BJ (cell line): ENCODE measurements at regions of chr10 and their contacts with region 1.

Region 1: DNA sequence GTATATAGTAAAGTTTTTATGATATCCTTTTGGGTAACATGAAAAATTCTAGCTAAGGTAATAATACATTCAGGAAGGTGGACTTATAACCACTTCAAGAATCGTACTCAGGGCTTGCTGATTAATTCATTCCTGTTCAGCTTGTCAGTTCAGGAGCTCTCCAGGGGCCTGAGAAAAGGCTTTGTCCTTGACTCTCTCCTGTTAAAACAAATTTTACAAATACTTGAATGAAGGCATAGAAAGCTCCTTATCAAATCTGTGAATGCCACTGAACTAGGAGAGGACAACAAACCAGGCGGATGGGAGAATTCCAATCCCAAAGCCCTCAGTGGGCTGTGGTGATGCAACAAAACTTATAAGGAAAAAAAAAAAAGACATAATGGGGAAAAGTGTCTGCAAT is 354.5 kb upstream of the ZMIZ1 start:
- DNase-seq: no peak
- H3K4me3 ChIP-seq: no peak overlapping the region
- H3K27me3 ChIP-seq: peaks cover 5% of the 10 kb centered on the region; the same call in 1 of the 2 replicates
- CTCF ChIP-seq: no peak

Region 2: DNA sequence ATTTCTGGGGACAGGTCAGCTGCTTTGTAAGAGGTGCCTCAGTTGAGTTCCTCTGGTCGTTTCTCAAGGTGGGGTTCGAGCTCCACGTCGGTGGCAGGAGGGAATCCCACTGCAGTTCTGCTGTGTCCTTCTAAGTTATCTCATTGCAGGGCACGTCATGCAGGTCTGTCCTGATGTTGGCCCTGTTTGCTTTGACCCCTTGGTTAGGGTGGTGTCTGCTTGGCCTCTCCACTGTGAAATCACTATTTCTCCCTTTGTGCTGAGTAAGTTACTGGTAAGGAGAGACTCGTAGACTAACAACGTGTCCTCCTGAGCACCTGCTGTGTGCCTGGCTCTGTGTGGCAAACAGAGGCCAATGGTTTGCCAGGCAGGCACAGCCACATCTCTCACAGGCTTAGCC is 18.4 kb before region 1 on chr10:
- CTCF ChIA-PET with region 1: no interaction called
- POLR2A ChIA-PET with region 1: interaction called, 12 read pairs
- DNase-seq: no peak
- H3K4me3 ChIP-seq: no peak overlapping the region
- H3K27me3 ChIP-seq: peaks cover 2% of the 10 kb centered on the region
- CTCF ChIP-seq: no peak